Thyroid gland (tissue), 4 donors: ENCODE measurements at regions of chrX and their contacts with region 1.

Region 1: GRCh38 chrX:72018277-72019112 is 107.8 kb downstream of the NHSL2 start:
- DNase-seq: peak; percentile 81
- H3K4me3 ChIP-seq: peak overlapping the region in 1 of 3 donors; percentile 10
- H3K27ac ChIP-seq: peak overlapping the region in 1 of 3 donors; percentile 22
- H3K4me1 ChIP-seq: no peaks in the 10 kb centered on the region
- H3K27me3 ChIP-seq: no peaks in the 10 kb centered on the region
- CTCF ChIP-seq: peak; percentile 13 to 79 (median 50)
- POLR2A ChIP-seq: no peak

Region 2: GRCh38 chrX:72069350-72070160 is 51.1 kb after region 1 on chrX:
- intact Hi-C with region 1: no loop called
- DNase-seq: peak; percentile 25 to 29
- H3K4me3 ChIP-seq: no peak overlapping the region
- H3K27ac ChIP-seq: peak overlapping the region in 1 of 3 donors; percentile 36
- H3K4me1 ChIP-seq: peaks cover 4 to 19% of the 10 kb centered on the region in 2 donors
- H3K27me3 ChIP-seq: no peaks in the 10 kb centered on the region
- CTCF ChIP-seq: no peak
- POLR2A ChIP-seq: no peak

Region 3: DNA sequence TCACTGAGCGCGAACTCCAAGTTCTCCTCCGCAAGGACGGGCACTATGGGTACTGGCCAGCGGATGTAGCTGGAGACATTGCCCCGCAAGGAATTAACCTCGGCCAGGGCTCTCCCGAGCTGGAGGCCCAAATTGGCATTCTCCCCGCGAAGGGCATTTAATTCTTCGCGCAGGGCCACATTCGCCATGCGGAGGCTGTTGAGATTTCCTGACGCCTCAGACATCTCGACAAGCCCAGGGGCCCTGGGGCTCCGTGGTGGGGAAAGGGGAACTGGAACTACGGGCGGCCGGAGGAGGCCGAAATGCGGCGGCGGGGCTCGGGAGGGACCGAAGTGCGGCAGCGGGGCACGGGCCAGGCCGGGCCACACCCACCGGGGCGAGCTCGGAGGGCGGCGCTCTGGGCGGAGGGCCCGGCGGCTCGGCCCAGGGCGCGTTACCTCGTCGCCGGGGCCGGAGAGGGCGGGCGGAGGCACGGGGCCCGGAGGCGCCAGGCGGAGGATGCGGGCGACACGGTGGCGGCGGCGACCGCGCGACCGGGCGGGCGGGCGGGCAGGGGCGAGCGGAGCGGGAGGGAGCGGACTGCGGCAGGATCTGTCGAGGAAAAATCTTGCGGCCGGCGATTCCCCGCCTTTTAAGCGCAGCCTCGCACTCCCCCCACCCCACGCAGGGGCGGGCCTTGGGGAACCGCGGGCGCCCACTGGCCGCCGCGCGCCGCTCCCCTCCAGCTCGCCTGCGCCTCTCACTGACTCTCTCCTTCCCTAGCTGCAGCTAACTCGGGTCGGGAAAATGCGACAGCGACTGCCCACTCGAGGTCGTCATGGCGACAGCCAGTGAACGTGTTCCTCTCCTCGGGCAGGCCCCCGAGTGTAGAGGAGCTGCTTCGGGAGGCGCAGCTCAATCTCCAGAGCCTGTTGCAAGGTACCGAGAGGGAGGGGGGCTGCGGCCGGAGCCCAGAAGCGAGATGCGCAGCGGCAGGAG is 113.1 kb after region 1 on chrX and contains the start of gene RTL5:
- intact Hi-C with region 1: loop called (anchors 5 kb)
- DNase-seq: peak; percentile 95 to 96
- H3K4me3 ChIP-seq: peak within 1 kb of the TSS; percentile 33 to 45 (median 34)
- H3K27ac ChIP-seq: peak within 1 kb of the TSS; percentile 56 to 68 (median 57)
- H3K4me1 ChIP-seq: peaks cover 0 to 16% of the 10 kb centered on the region in 2 donors
- H3K27me3 ChIP-seq: no peaks in the 10 kb centered on the region
- CTCF ChIP-seq: no peak
- POLR2A ChIP-seq: peak in 1 of 2 donors; percentile 75
- total RNA-seq, gene RTL5: 3.6 to 6.6 (median 5.9) TPM

Region 4: DNA sequence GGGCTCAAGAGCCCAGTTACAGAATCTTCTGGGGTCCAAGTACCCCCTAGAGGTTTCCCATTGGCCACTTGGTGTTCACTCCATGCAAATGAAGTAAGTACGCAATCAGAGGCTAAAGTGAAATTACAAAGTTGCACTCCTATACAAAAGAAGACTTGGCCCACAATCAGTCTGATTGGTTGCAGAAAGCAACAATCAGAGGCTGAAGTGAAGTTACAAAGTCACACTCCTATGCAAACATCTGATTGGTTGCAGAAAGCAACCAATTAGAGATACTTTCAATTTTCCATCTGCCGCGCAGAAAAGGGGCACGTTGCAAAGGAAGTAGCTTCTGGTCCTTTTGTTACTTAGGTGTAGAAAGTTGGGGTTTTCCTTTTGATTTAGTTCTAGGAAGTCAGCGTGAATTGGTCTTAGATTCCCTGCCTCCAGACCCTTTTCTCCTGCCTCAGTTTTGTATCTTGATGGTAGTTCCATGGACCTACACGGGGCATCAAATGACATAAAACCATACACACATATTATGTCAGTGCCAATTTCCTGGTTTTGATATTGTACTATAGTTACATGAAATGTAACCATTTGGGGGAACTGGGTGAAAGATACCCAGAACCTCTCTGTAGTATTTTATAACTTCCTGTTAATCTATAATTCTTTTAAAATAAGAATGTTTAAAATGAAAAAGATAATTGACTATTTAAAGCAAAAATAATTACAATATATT is 150.7 kb after region 1 on chrX:
- intact Hi-C with region 1: no loop called
- DNase-seq: no peak
- H3K4me3 ChIP-seq: no peak overlapping the region
- H3K27ac ChIP-seq: no peak overlapping the region
- H3K4me1 ChIP-seq: no peaks in the 10 kb centered on the region
- H3K27me3 ChIP-seq: no peaks in the 10 kb centered on the region
- CTCF ChIP-seq: no peak
- POLR2A ChIP-seq: no peak